H1 (cell line): ENCODE measurements at regions of chr14 and their contacts with region 1.

Region 1: GRCh38 chr14:75069045-75069810 is at the start of gene ZC2HC1C:
- DNase-seq: peak; percentile 83 to 98
- H3K4me3 ChIP-seq: peak within 1 kb of the TSS; percentile 70 to 90 (median 82)
- H3K27ac ChIP-seq: peak within 1 kb of the TSS; percentile 83
- H3K4me1 ChIP-seq: peaks cover 0 to 3% (median under 1%) of the 10 kb centered on the region in 4 experiments; a peak in 2 of 7 replicates
- H3K27me3 ChIP-seq: no peaks in the 10 kb centered on the region
- CTCF ChIP-seq: peak in 1 of 3 experiments; percentile 2; a peak in 1 of 4 replicates
- EP300 ChIP-seq: 0 out of 3 replicates have a peak, but pooled peaks of 1 of the 2 experiments have one; percentile 0
- POLR2A ChIP-seq: peak; percentile 64 to 79
- RAD21 ChIP-seq: no peak
- total RNA-seq, gene ZC2HC1C: 1.2 and 1.7 TPM in 2 replicates

Region 2: DNA sequence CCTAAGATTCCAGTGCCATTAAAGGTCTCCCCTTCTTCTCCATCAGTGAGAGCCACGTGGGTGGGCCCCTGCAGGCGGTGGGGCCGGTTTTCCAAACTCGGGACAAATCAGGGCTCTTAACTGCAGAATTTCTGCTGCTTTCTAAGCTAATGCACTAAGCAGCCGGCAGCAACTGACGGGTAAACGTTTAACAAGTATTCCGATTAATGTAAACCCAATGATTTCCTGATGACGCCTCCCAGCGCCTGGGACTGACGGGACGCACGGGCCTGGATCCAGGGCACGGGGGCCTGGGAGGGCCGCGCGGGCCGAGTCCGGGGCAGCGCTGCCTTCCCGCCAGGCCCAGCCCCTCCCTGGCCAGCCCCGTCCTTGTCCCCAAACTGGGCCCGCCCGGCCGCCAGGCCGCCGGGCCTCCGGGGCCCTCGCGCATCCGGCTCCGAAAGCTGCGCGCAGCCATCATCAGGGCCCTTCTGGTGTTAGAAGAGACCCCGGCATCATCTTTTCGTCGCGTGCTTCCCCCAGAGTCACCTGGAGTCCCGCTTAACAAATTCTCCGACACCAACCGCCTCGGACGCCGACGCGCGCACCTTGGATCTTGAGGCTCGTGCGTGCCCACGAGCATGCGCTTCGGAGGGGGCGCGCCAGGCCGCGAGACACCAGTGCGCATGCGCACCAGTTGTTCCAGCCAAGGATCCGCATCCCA is 18.2 kb before region 1 on chr14 and contains the start of gene MLH3:
- CTCF ChIA-PET with region 1: no interaction called
- POLR2A ChIA-PET with region 1: interaction called, 15 read pairs
- DNase-seq: peak; percentile 87 to 91
- H3K4me3 ChIP-seq: peak within 1 kb of the TSS; percentile 54 to 61 (median 58)
- H3K27ac ChIP-seq: peak within 1 kb of the TSS; percentile 67
- H3K4me1 ChIP-seq: peaks cover 0 to 4% (median 0%) of the 10 kb centered on the region in 4 experiments; a peak in 3 of 7 replicates
- H3K27me3 ChIP-seq: no peaks in the 10 kb centered on the region
- CTCF ChIP-seq: no peak
- EP300 ChIP-seq: no peak
- POLR2A ChIP-seq: peak; percentile 71 to 89
- RAD21 ChIP-seq: no peak
- total RNA-seq, gene MLH3: 19.1 and 20.1 TPM in 2 replicates

Region 3: DNA sequence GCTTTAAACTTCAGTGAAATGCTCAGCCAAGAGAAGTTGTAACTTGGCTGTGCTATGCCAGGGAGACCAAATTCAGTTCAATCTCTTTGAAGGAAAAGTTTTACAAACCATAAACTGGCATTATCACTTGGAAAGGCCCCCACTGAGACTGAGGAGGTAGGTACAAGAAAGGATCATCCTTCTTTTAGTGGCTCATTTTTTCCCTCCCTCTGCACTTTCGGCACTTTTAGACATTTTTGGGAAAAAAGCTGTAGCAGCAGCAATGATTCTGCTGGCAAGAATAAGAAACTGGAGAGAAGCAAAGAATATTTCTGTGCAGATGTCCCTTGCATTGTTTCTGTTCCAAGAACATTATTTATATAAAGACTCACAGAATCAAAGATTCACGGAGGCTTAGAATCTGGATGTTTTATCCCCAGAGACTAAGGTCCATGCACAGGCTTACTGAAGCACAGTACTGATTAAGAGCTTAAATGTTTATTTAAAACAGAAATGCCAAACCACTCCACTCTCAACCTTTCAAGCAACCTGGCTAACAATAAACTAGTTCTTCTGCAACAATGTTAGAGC is 12.5 kb after region 1 on chr14:
- CTCF ChIA-PET with region 1: interaction called, 39 read pairs
- POLR2A ChIA-PET with region 1: interaction called, 22 read pairs
- DNase-seq: no peak
- H3K4me3 ChIP-seq: no peak overlapping the region
- H3K27ac ChIP-seq: no peak overlapping the region
- H3K4me1 ChIP-seq: no peaks in the 10 kb centered on the region
- H3K27me3 ChIP-seq: no peaks in the 10 kb centered on the region
- CTCF ChIP-seq: no peak
- EP300 ChIP-seq: no peak
- POLR2A ChIP-seq: no peak
- RAD21 ChIP-seq: no peak